ENCODE measurements at regions of chr1 and their contacts with region 1.

Region 1: GRCh38 chr1:91500756-91501522 is at the start of gene CDC7:
- DNase-seq: peak; percentile 93 to 96
- H3K4me3 ChIP-seq: peak within 1 kb of the TSS; percentile 53 to 81
- H3K27ac ChIP-seq: peak within 1 kb of the TSS; percentile 89 to 96
- H3K4me1 ChIP-seq: no peaks in the 10 kb centered on the region
- H3K27me3 ChIP-seq: no peaks in the 10 kb centered on the region
- CTCF ChIP-seq: peak; percentile 9 to 34 (median 22)
- POLR2A ChIP-seq: peak in 1 of 2 donors; percentile 24
- total RNA-seq, gene CDC7: 0.59 to 33.5 (median 2.7) TPM

Region 2: GRCh38 chr1:90943966-90944365 is 557.0 kb before region 1 on chr1:
- intact Hi-C with region 1: no loop called
- DNase-seq: no peak
- H3K4me3 ChIP-seq: no peak overlapping the region
- H3K27ac ChIP-seq: no peak overlapping the region
- H3K4me1 ChIP-seq: no peaks in the 10 kb centered on the region
- H3K27me3 ChIP-seq: no peaks in the 10 kb centered on the region
- CTCF ChIP-seq: no peak
- POLR2A ChIP-seq: no peak

Region 3: DNA sequence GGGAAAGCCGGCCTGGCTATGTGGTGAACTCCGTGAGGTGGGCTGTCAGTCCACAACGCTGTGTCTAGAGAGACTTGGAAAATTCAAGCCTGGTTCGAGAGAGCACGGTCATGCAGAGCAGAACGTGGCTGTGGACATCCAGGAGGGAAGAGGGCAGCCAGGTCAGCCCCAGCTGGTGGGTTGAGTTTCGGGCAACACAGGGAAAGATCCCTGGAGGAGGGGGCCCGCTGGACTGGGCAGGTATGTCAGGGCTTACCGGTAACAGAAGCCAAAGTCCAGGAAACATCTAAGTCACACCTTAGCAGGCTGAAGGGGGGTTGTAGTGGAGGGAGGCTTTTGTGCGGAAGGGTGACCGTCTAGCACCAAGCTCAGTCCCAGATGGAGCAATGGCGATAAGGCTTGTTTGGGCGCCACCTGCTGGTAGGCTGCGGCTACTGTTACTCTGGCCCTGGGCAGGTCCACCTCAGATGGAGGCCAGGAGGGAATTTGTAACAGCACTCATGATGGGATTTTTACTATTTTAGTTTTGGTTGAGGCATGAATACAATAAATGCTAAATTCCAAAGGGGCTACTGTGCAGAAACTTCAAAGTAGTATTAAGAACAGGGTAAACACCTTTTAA is 335.8 kb before region 1 on chr1:
- intact Hi-C with region 1: no loop called
- DNase-seq: peak; percentile 66 to 69
- H3K4me3 ChIP-seq: no peak overlapping the region
- H3K27ac ChIP-seq: no peak overlapping the region
- H3K4me1 ChIP-seq: no peaks in the 10 kb centered on the region
- H3K27me3 ChIP-seq: no peaks in the 10 kb centered on the region
- CTCF ChIP-seq: peak; percentile 78 to 84 (median 80)
- POLR2A ChIP-seq: no peak

Region 4: DNA sequence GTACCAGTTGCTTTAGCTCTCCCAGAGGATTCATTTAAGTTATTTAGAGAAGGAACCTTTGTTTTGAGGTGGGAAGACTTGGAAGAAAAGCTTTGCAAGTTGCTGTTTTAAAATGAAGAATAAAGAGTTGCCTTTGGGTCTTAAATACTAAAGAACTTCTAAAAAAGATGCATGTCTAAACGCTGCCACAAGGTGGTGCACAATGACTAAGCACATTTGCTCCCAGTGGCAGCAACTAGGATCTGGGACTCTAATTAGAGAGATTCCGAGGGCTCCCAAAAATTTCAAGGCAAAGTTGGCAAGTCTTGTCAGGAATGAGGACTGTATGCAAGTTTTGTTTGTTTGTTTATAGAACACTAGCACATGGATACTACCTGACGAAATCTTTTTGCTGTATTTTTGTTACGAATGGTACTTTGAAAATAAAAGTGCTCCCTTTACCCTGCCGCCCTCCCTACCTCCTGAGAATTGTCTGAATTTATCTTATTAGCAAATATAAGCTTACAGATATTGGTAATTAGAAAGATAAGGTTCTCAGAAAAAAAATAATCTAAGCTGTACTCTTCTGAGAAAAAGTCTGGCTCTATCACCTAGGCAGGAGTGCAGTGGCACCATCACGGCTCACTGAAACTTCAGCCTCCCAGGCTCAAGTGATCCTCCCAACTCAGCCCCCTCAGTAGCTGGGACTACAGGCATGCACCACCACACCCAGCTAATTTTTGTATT is 218.1 kb before region 1 on chr1:
- intact Hi-C with region 1: loop called (anchors 10 kb)
- DNase-seq: peak; percentile 38 to 68
- H3K4me3 ChIP-seq: no peak overlapping the region
- H3K27ac ChIP-seq: no peak overlapping the region
- H3K4me1 ChIP-seq: no peaks in the 10 kb centered on the region
- H3K27me3 ChIP-seq: no peaks in the 10 kb centered on the region
- CTCF ChIP-seq: peak; percentile 69 to 76 (median 76)
- POLR2A ChIP-seq: no peak

Measured in uterus (tissue), 4 donors.